K562 (cell line): ENCODE measurements at regions of chr2 and their contacts with region 1.

Region 1: DNA sequence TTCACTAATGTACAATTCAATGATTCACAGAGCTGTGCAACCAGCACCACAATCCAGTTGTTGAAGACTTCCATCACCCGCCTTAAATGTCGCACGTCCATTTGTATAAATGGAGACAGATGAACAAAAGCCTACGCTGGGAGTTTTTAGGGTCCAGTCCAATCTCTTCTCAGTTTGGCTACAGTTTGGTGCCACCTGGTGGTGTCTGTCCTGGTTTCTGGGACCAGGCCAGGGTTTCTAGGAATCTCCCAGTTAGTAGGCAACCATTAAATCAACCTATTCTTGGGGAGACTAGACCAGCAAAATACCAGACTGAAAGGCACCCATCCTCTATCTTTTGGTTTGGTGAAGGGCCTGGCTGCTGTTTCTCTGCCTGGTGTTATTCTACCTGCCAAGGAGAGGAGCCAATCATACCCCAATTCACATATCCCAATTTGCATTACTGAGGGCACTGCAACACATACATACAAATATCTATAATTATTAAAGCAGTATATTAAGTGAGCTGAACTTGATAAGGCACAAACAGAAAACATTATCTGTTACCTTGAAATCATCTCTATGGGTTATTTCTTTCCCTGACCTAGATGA is 3.2 kb upstream of the DDX1 start:
- DNase-seq: peak; percentile 50 to 87 (median 67)
- ATAC-seq: peak; percentile 47
- H3K4me3 ChIP-seq: no peak overlapping the region
- H3K27ac ChIP-seq: no peak overlapping the region
- H3K4me1 ChIP-seq: peaks cover 5 to 16% of the 10 kb centered on the region in 2 experiments; a peak in 4 of 5 replicates
- H3K27me3 ChIP-seq: no peaks in the 10 kb centered on the region
- CTCF ChIP-seq: peak; percentile 74 to 82 (median 80)
- EP300 ChIP-seq: no peak
- POLR2A ChIP-seq: no peak
- RAD21 ChIP-seq: peak; percentile 66 to 84

Region 2: DNA sequence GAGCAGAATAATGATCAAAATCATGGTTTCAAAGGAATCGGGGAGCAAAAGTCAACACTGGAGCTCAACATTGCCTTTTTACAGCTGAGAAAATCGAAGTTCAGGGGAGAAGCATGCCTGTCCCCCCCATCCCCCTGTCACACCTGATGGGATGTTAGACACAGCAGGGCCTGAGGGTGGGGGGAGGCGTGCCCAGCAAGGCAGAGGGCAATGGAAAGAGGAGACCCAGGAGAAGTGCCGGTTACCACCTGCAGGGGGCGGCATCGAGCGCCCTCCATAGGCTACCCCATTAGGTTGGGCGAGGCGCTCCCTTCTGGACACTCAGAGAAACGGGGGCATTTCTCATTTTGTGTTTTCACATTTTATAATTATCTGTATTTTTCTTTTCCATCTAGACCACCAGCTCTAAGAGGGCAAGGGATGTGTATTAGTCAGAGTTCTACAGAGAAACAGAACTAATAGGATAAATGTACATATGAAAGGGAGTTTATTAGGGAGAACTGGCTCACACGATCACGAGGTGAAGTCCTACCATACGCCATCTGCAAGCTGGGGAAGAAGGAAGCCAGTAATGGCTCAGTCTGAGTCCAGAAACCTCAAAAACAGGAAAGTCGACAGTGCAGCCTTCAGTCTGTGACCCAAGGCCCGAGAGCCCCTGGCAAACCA is 684.6 kb before region 1 on chr2:
- CTCF ChIA-PET with region 1: no interaction called
- POLR2A ChIA-PET with region 1: no interaction called
- in situ Hi-C with region 1: loop called (anchors 25 kb)
- intact Hi-C with region 1: loop called (anchors 5 kb)
- DNase-seq: peak; percentile 81 to 87 (median 84)
- ATAC-seq: peak; percentile 100
- H3K4me3 ChIP-seq: no peak overlapping the region
- H3K27ac ChIP-seq: no peak overlapping the region
- H3K4me1 ChIP-seq: no peaks in the 10 kb centered on the region
- H3K27me3 ChIP-seq: no peaks in the 10 kb centered on the region
- CTCF ChIP-seq: peak; percentile 98 to 100 (median 99)
- EP300 ChIP-seq: no peak
- POLR2A ChIP-seq: no peak
- RAD21 ChIP-seq: peak; percentile 66 to 83

Region 3: GRCh38 chr2:15159751-15160177 is 428.7 kb before region 1 on chr2:
- CTCF ChIA-PET with region 1: no interaction called
- POLR2A ChIA-PET with region 1: interaction called, 3 read pairs
- in situ Hi-C with region 1: no loop called
- intact Hi-C with region 1: loop called (anchors 10 kb)
- DNase-seq: peak in 3 of 4 experiments; percentile 34 to 52 (median 39)
- ATAC-seq: peak; percentile 68
- H3K4me3 ChIP-seq: no peak overlapping the region
- H3K27ac ChIP-seq: no peak overlapping the region
- H3K4me1 ChIP-seq: no peaks in the 10 kb centered on the region
- H3K27me3 ChIP-seq: peaks cover 0 to 6% of the 10 kb centered on the region in 2 experiments; a peak in 1 of 5 replicates
- CTCF ChIP-seq: peak; percentile 29 to 65 (median 64); a peak in 4 of 6 replicates
- EP300 ChIP-seq: no peak
- POLR2A ChIP-seq: no peak
- RAD21 ChIP-seq: peak; percentile 30 to 65; a peak in 3 of 4 replicates